ENCODE measurements at regions of chr1 and their contacts with region 1.

Region 1: GRCh38 chr1:23743287-23744052 is at the start of gene ELOA:
- DNase-seq: peak; percentile 85
- H3K4me3 Mint-ChIP-seq: peak within 1 kb of the TSS; percentile 88
- H3K27ac Mint-ChIP-seq: peak within 1 kb of the TSS; percentile 88
- H3K4me1 Mint-ChIP-seq: peaks cover 47% of the 10 kb centered on the region
- H3K27me3 Mint-ChIP-seq: no peaks in the 10 kb centered on the region
- total RNA-seq, gene ELOA: 28.1 to 30.4 TPM

Region 2: GRCh38 chr1:23530747-23531561 is 212.5 kb before region 1 on chr1 and contains the start of gene E2F2:
- CTCF ChIA-PET with region 1: no interaction called
- POLR2A ChIA-PET with region 1: no interaction called
- intact Hi-C with region 1: loop called (anchors 5 kb)
- DNase-seq: peak; percentile 89
- H3K4me3 Mint-ChIP-seq: peak within 1 kb of the TSS; percentile 88
- H3K27ac Mint-ChIP-seq: peak within 1 kb of the TSS; percentile 91
- H3K4me1 Mint-ChIP-seq: peaks cover 75% of the 10 kb centered on the region
- H3K27me3 Mint-ChIP-seq: no peaks in the 10 kb centered on the region
- total RNA-seq, gene E2F2: 22.1 to 26.3 TPM

Region 3: DNA sequence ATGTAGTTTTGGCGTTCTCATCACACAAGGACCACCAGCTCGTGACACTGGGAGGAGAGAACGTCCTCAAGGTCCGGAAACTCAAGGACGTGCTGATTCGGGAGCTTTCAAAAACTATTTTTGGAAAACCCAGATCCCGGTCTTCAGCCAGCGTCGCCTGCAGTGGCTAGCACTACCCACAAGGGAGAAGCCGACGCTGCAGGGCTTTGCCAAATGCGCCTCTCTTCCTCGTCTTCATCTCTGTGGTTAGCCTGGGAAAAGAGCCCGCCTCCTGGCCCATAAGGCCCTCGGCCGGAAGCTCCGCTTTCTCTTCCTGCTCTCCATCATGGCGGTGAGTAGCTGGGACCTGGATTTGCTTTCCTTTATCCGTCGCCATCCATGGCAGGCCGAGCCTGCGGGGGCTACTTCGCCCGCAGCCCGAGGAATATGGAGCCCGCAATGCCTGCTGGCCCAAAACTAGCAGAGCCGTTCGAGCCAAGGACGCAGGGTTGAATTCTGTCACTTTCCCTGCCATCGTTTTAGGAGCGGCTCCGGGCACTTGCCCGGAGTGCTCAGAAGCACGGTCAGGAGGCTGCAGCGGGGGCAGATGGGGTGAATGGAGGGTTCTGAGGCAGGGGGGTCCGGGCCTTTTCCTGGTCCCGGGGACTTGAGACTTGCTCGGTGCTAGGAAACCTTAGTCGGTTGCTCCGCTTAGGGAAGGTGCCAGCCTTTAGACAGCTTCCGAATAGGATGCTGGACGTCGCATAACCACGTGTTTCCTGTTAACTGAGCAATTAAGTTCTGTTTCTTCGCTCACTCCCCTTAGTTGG is 51.8 kb before region 1 on chr1 and contains the start of gene RPL11:
- CTCF ChIA-PET with region 1: interaction called, 33 read pairs
- POLR2A ChIA-PET with region 1: interaction called, 44 read pairs
- intact Hi-C with region 1: loop called (anchors 2 kb)
- DNase-seq: peak; percentile 93
- H3K4me3 Mint-ChIP-seq: peak within 1 kb of the TSS; percentile 92
- H3K27ac Mint-ChIP-seq: peak within 1 kb of the TSS; percentile 78
- H3K4me1 Mint-ChIP-seq: peaks cover 42% of the 10 kb centered on the region
- H3K27me3 Mint-ChIP-seq: no peaks in the 10 kb centered on the region
- total RNA-seq, gene RPL11: 1,338 to 1,385 TPM

Region 4: DNA sequence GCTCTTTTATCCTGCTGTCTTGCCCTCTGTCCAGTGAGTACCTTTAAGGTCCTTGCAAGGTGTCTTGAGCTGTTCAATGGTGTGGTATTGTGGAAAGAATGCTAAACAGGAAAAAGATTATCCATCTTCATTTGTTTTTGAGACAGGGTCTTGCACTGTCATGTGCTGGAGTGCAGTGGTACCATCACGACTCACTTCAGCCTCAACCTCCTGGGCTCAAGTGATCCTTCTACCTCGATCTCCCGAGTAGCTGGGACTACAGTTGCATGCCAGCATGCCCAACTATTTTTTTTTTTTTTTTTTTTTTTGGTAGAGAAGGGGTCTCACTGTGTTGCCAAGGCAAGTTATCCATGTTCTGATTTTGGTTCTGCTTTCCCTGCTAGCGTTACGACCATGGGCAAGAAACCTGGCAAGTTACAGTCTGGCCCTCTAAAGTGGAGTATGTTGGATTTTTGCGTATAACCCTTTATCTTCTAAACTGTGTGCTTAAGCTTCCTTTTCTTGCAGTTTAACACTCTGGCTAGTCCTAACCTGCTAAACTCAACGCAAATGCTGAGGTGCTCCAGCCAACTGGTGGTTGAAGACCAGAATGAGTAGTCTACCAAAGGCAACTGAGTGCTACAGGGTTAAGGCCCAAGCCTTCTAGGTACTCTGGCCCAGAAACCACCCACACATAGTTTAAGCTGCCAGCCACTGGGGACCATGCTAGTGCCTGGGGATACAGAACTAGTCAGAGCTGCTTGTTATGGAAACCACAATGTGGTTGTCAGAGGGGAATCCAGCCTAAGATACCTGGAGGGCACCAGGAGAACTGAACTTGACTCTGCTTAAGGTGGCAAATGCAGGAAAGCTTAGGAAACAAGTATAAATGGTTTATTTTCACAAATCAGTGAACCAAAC is 43.9 kb before region 1 on chr1:
- CTCF ChIA-PET with region 1: interaction called, 33 read pairs
- POLR2A ChIA-PET with region 1: interaction called, 44 read pairs
- intact Hi-C with region 1: no loop called
- DNase-seq: peak; percentile 26
- H3K4me3 Mint-ChIP-seq: no peak overlapping the region
- H3K27ac Mint-ChIP-seq: no peak overlapping the region
- H3K4me1 Mint-ChIP-seq: peaks cover 54% of the 10 kb centered on the region
- H3K27me3 Mint-ChIP-seq: no peaks in the 10 kb centered on the region

Region 5: GRCh38 chr1:23720256-23720995 is 23.0 kb before region 1 on chr1:
- CTCF ChIA-PET with region 1: interaction called, 3 read pairs
- POLR2A ChIA-PET with region 1: interaction called, 4 read pairs
- intact Hi-C with region 1: loop called (anchors 2 kb)
- DNase-seq: peak; percentile 62
- H3K4me3 Mint-ChIP-seq: peak overlapping the region; percentile 4
- H3K27ac Mint-ChIP-seq: peak overlapping the region; percentile 62
- H3K4me1 Mint-ChIP-seq: peaks cover 24% of the 10 kb centered on the region
- H3K27me3 Mint-ChIP-seq: no peaks in the 10 kb centered on the region

Measured in activated CD4-positive, alpha-beta memory T cell treated with anti-CD3 and anti-CD28 coated beads for 36 hours (primary cell).